ENCODE measurements at regions of chr4 and their contacts with region 1.

Region 1: DNA sequence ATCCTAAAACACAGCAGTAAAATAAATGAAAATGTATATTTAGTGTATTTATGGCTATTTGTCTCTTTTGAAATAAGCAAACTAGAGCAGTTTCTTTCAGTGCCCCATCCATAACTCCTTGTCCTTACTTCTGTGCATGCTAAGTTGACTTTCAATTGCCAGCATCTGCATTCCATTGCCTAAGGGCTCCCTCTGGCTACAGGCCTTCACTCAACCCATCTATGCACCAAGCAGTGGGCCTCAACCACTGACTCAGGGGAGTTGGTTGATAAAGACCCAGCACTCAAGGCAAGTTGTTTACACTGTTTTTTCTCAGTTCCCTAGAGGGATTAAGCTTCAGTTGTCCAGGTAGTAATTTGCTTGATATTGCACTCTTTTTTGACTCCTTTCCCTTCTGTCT is 265.7 kb downstream of the IQCM start:
- DNase-seq: peak in 1 of 2 donors; percentile 6
- ATAC-seq: peak in 5 of 8 donors; percentile 58 to 71 (median 62)
- H3K4me3 ChIP-seq: no peak overlapping the region
- H3K27ac ChIP-seq: no peak overlapping the region
- H3K4me1 ChIP-seq: no peaks in the 10 kb centered on the region
- H3K27me3 ChIP-seq: no peaks in the 10 kb centered on the region
- CTCF ChIP-seq: peak in 7 of 9 donors; percentile 6 to 62 (median 47)

Region 2: DNA sequence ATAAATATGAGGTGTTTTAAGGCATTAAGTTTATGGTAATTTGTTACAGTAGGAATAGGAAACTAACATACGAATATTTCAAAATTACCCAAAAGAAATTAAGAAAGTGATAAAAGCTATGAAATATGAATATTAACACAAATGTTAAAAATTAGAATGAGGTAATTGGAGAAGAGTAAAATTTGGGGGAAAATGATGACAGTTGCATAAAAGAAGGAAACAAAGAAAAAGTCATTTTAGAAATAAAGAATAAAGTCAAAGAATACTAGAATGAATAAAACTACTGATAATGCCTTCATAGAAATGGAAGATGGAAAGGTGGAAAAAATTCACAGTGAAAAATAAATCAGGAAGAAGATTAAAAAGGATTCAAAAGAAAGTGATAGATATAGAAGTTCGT is 584.8 kb before region 1 on chr4:
- intact Hi-C with region 1: no loop called
- DNase-seq: no peak
- ATAC-seq: no peak
- H3K4me3 ChIP-seq: no peak overlapping the region
- H3K27ac ChIP-seq: no peak overlapping the region
- H3K4me1 ChIP-seq: no peaks in the 10 kb centered on the region
- H3K27me3 ChIP-seq: no peaks in the 10 kb centered on the region
- CTCF ChIP-seq: no peak

Region 3: DNA sequence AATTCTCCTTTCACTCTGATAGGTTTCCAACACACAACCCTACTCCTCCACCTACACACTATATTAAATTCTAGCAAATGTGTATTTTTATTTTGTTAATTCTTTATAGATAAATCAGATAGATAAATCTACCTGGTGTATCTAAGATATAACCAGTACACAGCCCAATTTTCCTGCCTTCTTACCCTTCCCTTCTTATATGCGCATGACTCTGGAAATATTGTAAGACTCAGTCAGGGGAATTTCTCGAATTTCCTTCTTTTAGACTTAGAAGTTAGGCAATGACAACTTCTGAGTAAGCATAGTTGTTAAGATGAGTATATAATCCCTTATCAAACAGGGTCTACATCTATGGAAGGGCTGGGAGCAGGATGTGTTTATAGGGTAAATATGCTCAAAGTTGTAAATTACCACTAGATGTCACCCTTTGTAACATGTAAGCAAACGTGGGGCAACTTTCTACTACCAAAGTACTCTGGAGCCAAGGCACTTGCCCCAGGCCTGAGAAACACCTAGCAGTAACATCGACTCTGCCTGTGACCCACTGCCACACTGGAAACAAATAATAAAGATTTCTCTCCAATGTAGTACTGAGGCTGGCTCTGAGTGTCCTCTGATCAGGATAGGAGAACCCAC is 179.0 kb before region 1 on chr4:
- intact Hi-C with region 1: loop called in 9 of 10 experiments (anchors 1 to 10 kb)
- DNase-seq: no peak
- ATAC-seq: peak in 6 of 8 donors; percentile 55 to 70 (median 62)
- H3K4me3 ChIP-seq: no peak overlapping the region
- H3K27ac ChIP-seq: no peak overlapping the region
- H3K4me1 ChIP-seq: peaks cover 0 to 8% (median 0%) of the 10 kb centered on the region in 9 donors
- H3K27me3 ChIP-seq: no peaks in the 10 kb centered on the region
- CTCF ChIP-seq: peak in 8 of 9 donors; percentile 17 to 62 (median 41)

Region 4: GRCh38 chr4:149500806-149501205 is 49.1 kb before region 1 on chr4:
- intact Hi-C with region 1: no loop called
- DNase-seq: no peak
- ATAC-seq: no peak
- H3K4me3 ChIP-seq: no peak overlapping the region
- H3K27ac ChIP-seq: no peak overlapping the region
- H3K4me1 ChIP-seq: no peaks in the 10 kb centered on the region
- H3K27me3 ChIP-seq: no peaks in the 10 kb centered on the region
- CTCF ChIP-seq: no peak

Region 5: GRCh38 chr4:149881744-149882143 is 331.8 kb after region 1 on chr4:
- intact Hi-C with region 1: no loop called
- DNase-seq: no peak
- ATAC-seq: peak in 3 of 8 donors; percentile 46 to 71 (median 61)
- H3K4me3 ChIP-seq: no peak overlapping the region
- H3K27ac ChIP-seq: peak overlapping the region in 3 of 10 donors; percentile 16 to 50 (median 25)
- H3K4me1 ChIP-seq: peaks cover 0 to 13% (median 0%) of the 10 kb centered on the region in 9 donors
- H3K27me3 ChIP-seq: no peaks in the 10 kb centered on the region
- CTCF ChIP-seq: no peak

Region 6: GRCh38 chr4:149897783-149898182 is 347.9 kb after region 1 on chr4:
- intact Hi-C with region 1: loop called in 2 of 10 experiments (anchors 5 to 10 kb)
- DNase-seq: no peak
- ATAC-seq: peak in 1 of 8 donors; percentile 60
- H3K4me3 ChIP-seq: no peak overlapping the region
- H3K27ac ChIP-seq: no peak overlapping the region
- H3K4me1 ChIP-seq: no peaks in the 10 kb centered on the region
- H3K27me3 ChIP-seq: no peaks in the 10 kb centered on the region
- CTCF ChIP-seq: peak in 7 of 9 donors; percentile 21 to 61 (median 49)

Measured in heart right ventricle (tissue), 16 donors.